K562 (cell line): ENCODE measurements at regions of chr17 and their contacts with region 1.

Region 1: GRCh38 chr17:76681222-76682137 is 29.3 kb downstream of the MXRA7 start:
- DNase-seq: peak; percentile 66 to 87 (median 74)
- ATAC-seq: peak; percentile 89
- H3K4me3 ChIP-seq: no peak overlapping the region
- H3K27ac ChIP-seq: no peak overlapping the region
- H3K4me1 ChIP-seq: peaks cover 18 to 53% of the 10 kb centered on the region in 2 experiments
- H3K27me3 ChIP-seq: no peaks in the 10 kb centered on the region
- CTCF ChIP-seq: peak; percentile 91 to 95 (median 91)
- EP300 ChIP-seq: no peak
- POLR2A ChIP-seq: no peak
- RAD21 ChIP-seq: peak; percentile 86 to 94

Region 2: GRCh38 chr17:76523084-76524037 is 158.1 kb before region 1 on chr17:
- CTCF ChIA-PET with region 1: interaction called, 16 read pairs
- POLR2A ChIA-PET with region 1: no interaction called
- in situ Hi-C with region 1: loop called (anchors 5 kb)
- intact Hi-C with region 1: loop called (anchors 2 kb)
- DNase-seq: peak; percentile 84 to 91 (median 89)
- ATAC-seq: peak; percentile 96
- H3K4me3 ChIP-seq: no peak overlapping the region
- H3K27ac ChIP-seq: no peak overlapping the region
- H3K4me1 ChIP-seq: peaks cover 5 to 25% of the 10 kb centered on the region in 2 experiments; a peak in 4 of 5 replicates
- H3K27me3 ChIP-seq: no peaks in the 10 kb centered on the region
- CTCF ChIP-seq: peak; percentile 97 to 99 (median 98)
- EP300 ChIP-seq: no peak
- POLR2A ChIP-seq: no peak
- RAD21 ChIP-seq: peak; percentile 93 to 98

Region 3: GRCh38 chr17:76623271-76624146 is 58.0 kb before region 1 on chr17:
- CTCF ChIA-PET with region 1: interaction called, 3 read pairs
- POLR2A ChIA-PET with region 1: interaction called, 4 read pairs
- in situ Hi-C with region 1: no loop called
- intact Hi-C with region 1: loop called (anchors 5 kb)
- DNase-seq: peak; percentile 74 to 84 (median 78)
- ATAC-seq: peak; percentile 95
- H3K4me3 ChIP-seq: no peak overlapping the region
- H3K27ac ChIP-seq: peak overlapping the region; percentile 54; the same call in 2 of the 3 replicates
- H3K4me1 ChIP-seq: peaks cover 5 to 8% of the 10 kb centered on the region in 2 experiments; a peak in 4 of 5 replicates
- H3K27me3 ChIP-seq: no peaks in the 10 kb centered on the region
- CTCF ChIP-seq: peak; percentile 91 to 94 (median 93)
- EP300 ChIP-seq: peak; percentile 13; the same call in 1 of the 2 replicates
- POLR2A ChIP-seq: no peak; the same call in 1 of the 2 replicates
- RAD21 ChIP-seq: peak; percentile 87 to 92

Region 4: DNA sequence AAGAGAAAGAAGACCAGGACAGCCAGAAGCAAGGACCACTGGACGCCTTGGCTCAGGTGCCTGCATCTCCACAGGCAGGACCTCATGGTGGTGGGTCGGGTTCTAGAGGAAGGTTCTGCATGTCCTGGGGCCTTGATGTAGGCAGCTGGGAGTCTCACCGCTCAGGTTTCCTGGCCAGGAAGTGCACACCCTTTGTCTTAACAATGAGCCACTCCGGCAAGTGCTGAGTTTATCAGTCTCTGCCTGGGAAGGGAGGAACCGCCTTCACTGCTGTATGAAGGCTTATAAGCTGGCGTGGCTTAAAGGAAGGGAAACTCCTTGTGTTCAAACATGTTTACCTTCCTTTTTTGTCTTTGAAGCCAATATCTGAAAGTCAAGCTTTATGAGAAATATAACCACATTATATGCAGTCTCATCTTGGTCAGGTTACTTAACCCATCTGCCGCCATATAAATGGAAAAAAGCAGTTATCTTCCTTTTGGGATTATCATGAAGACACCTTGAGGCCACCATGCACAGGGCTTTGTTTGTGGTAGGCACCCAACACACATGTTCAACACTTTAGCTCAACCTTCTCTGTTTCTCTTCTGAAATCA is 37.8 kb before region 1 on chr17 and contains the start of gene ST6GALNAC1:
- CTCF ChIA-PET with region 1: no interaction called
- POLR2A ChIA-PET with region 1: interaction called, 4 read pairs
- in situ Hi-C with region 1: no loop called
- intact Hi-C with region 1: loop called (anchors 2 kb)
- DNase-seq: peak; percentile 70 to 94 (median 78)
- ATAC-seq: peak; percentile 85
- H3K4me3 ChIP-seq: peak within 1 kb of the TSS; percentile 47
- H3K27ac ChIP-seq: peak within 1 kb of the TSS; percentile 94
- H3K4me1 ChIP-seq: peaks cover 22 to 26% of the 10 kb centered on the region in 2 experiments; a peak in 4 of 5 replicates
- H3K27me3 ChIP-seq: no peaks in the 10 kb centered on the region
- CTCF ChIP-seq: no peak
- EP300 ChIP-seq: peak; percentile 61
- POLR2A ChIP-seq: peak; percentile 91
- RAD21 ChIP-seq: no peak
- polyA plus RNA-seq, gene ST6GALNAC1: 50.4 to 62.9 TPM

Region 5: GRCh38 chr17:76671123-76671911 is 10.2 kb before region 1 on chr17:
- CTCF ChIA-PET with region 1: no interaction called
- POLR2A ChIA-PET with region 1: interaction called, 10 read pairs
- in situ Hi-C with region 1: no loop called
- intact Hi-C with region 1: no loop called
- DNase-seq: peak; percentile 97 to 99 (median 98)
- ATAC-seq: peak; percentile 97
- H3K4me3 ChIP-seq: peak overlapping the region; percentile 60
- H3K27ac ChIP-seq: peak overlapping the region; percentile 88
- H3K4me1 ChIP-seq: peaks cover 30 to 37% of the 10 kb centered on the region in 2 experiments; a peak in 4 of 5 replicates
- H3K27me3 ChIP-seq: no peaks in the 10 kb centered on the region
- CTCF ChIP-seq: no peak
- EP300 ChIP-seq: no peak
- POLR2A ChIP-seq: peak; percentile 80
- RAD21 ChIP-seq: no peak

Region 6: GRCh38 chr17:76714822-76715495 is 33.5 kb after region 1 on chr17:
- CTCF ChIA-PET with region 1: interaction called, 3 read pairs
- POLR2A ChIA-PET with region 1: interaction called, 6 read pairs
- in situ Hi-C with region 1: no loop called
- intact Hi-C with region 1: loop called (anchors 1 kb)
- DNase-seq: peak in 3 of 4 experiments; percentile 47 to 79 (median 56)
- ATAC-seq: peak; percentile 36
- H3K4me3 ChIP-seq: no peak overlapping the region
- H3K27ac ChIP-seq: no peak overlapping the region; the same call in 2 of the 3 replicates
- H3K4me1 ChIP-seq: peaks cover 26 to 35% of the 10 kb centered on the region in 2 experiments
- H3K27me3 ChIP-seq: no peaks in the 10 kb centered on the region
- CTCF ChIP-seq: peak; percentile 79 to 84 (median 82)
- EP300 ChIP-seq: no peak
- POLR2A ChIP-seq: no peak
- RAD21 ChIP-seq: peak; percentile 59 to 70